AG04450 (cell line): ENCODE measurements at regions of chr1 and their contacts with region 1.

Region 1: DNA sequence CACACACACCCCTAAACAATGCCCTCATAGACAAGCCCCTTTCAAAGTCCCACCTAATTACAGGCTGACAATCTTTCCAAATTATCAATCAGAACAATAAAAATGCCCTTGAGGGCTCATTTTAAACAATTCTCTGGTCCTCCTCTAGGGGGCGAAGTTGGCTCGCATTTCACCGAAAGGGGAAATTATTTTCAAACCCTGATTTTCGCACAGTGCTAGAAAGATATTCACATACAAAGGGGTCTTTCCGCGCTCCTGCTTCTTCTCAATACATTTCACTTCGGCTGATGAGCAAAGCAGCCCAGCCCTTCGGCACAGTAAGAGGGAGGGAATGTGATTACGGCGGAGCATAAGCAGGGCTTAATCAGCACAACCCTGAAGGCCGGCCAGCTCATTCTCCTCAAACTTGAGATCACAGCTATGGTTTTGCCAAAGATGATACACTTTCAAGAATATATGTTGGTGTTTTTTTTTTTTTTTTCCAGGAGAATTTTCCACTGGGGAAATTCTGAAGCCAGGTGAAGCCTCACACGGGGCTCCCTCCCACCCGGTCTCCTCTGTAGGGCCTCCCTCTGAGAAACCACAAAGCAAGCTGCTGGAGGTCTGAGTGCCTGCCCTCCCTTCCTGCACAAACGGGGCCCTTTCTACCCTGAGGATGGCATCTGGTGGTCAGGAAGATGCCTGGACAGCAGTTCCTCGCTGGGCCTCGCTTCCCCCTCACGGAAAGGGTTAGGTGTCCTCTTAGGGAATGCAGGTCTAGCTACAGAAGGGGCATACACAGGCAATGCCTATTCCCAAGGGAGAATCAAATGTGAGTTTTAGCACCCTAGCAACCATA is 66.9 kb downstream of the GNG12 start:
- DNase-seq: peak; percentile 73
- H3K4me3 ChIP-seq: peak overlapping the region; percentile 37
- H3K27ac ChIP-seq: peak overlapping the region; percentile 87
- H3K27me3 ChIP-seq: no peaks in the 10 kb centered on the region
- CTCF ChIP-seq: peak; percentile 76

Region 2: DNA sequence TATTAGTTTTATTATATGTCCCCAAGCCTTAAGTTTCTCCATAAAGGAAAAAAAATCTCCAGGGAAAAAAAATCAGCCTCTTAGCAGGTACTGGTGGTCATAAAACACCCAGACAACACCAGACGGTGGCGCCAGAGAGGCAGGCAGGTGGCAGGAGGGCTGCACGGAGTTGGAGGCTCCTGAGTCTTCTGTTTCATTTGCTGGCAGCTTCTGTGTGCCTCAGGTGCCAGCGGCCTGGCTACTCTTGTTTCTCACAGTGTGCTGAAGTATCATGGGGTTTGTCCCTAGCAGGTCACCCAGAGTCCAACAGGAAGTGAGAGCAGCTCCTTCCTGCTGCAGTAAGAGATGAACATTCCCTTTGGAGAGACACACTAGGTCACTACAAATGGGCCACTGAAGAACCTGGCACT is 204.7 kb before region 1 on chr1:
- CTCF ChIA-PET with region 1: interaction called, 73 read pairs
- POLR2A ChIA-PET with region 1: no interaction called
- DNase-seq: peak; percentile 65
- H3K4me3 ChIP-seq: no peak overlapping the region
- H3K27ac ChIP-seq: no peak overlapping the region
- H3K27me3 ChIP-seq: no peaks in the 10 kb centered on the region
- CTCF ChIP-seq: peak; percentile 96

Region 3: DNA sequence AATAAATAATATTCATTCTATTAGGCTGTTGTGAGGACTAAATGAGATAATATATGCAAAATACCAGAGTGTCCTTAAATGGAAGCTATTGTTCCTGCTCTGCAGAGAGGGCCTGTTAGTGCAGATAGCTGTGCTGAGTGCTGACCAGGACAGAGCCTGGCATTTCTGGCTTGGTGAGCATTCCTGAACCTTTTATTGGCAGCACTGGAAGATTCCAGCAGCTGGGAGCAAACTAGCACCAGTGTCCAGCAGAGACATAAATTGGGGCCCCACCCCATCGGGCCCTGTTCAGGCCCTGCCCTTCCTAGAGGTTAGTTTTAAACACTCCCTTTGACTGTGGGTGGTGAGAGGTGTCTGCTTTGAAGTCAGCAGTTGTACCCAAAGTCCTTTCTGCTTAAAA is 167.3 kb before region 1 on chr1:
- CTCF ChIA-PET with region 1: no interaction called
- POLR2A ChIA-PET with region 1: no interaction called
- DNase-seq: no peak
- H3K4me3 ChIP-seq: no peak overlapping the region
- H3K27ac ChIP-seq: no peak overlapping the region
- H3K27me3 ChIP-seq: no peaks in the 10 kb centered on the region
- CTCF ChIP-seq: no peak

Region 4: GRCh38 chr1:67777440-67777839 is 11.1 kb after region 1 on chr1:
- CTCF ChIA-PET with region 1: interaction called, 16 read pairs
- POLR2A ChIA-PET with region 1: no interaction called
- DNase-seq: no peak
- H3K4me3 ChIP-seq: no peak overlapping the region
- H3K27ac ChIP-seq: no peak overlapping the region
- H3K27me3 ChIP-seq: no peaks in the 10 kb centered on the region
- CTCF ChIP-seq: no peak

Region 5: DNA sequence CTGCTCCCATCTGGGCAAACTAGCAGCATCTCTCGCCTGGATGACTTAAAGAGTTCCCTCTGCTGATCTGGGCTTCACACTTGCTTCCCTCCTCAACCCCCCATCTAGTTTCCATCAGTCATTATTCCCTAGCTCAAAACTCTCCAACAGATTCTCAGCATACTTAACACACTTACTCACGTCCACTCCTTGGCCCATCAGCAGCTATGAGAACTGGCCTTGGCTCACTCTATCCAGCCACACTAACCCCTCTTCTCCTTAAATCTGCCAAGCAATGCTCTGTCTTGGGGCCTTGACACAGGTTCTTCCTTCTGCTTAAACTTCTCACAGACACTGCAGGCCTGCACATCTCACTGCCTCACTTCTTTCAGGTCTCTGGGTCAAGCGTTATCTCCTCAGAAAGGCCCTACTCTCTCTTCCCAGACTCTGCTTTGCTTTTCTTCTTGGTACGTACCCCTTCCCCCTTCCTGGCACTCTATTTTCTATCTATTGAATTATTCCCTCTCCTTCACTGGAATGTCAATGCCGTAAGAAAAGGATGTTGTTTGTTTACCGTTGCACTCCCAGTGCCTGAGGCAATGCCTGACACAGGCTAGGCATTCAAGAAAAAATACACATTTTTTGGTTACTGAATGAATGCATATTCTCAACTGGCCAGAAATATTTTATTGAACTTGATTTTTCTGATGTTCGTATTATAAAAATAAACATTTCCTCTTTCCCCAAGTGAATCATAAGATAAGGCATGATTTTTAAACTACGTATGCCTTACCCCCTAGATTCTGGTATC is 25.5 kb after region 1 on chr1:
- CTCF ChIA-PET with region 1: interaction called, 29 read pairs
- POLR2A ChIA-PET with region 1: interaction called, 4 read pairs
- DNase-seq: peak; percentile 78
- H3K4me3 ChIP-seq: peak overlapping the region; percentile 22
- H3K27ac ChIP-seq: peak overlapping the region; percentile 98
- H3K27me3 ChIP-seq: no peaks in the 10 kb centered on the region
- CTCF ChIP-seq: no peak

Region 6: DNA sequence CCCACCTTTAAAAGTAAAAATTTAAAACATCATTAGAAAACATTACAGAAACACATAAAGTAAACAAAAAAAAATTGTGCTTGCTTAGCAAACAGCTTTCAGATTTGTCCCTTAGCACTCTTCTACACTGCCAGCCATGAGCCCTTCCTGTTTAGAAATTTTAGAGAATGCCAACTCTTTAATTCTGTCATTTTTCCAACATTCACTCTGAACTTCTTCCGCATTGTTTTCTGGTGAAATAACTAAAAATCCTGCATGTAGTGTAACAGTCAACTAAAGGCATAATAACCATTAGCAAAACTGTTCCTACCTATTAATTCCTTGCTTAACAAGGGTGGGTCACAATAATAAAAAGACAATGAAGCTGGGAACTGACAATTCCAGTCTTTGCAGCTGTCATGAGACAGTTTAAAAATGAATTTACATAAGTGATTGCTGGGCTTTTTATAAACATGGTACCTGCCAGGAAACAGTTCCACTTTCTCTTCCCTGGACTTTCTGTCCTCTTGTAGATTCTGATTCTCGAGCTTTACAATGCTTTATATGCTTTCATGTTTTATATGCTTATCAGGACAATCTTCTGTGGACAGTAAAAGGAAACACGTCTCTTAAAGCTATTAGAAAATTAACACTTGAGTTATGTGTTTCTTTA is 47.9 kb after region 1 on chr1:
- CTCF ChIA-PET with region 1: interaction called, 10 read pairs
- POLR2A ChIA-PET with region 1: no interaction called
- DNase-seq: no peak
- H3K4me3 ChIP-seq: no peak overlapping the region
- H3K27ac ChIP-seq: no peak overlapping the region
- H3K27me3 ChIP-seq: no peaks in the 10 kb centered on the region
- CTCF ChIP-seq: no peak

Region 7: GRCh38 chr1:67853704-67854103 is 87.3 kb after region 1 on chr1:
- CTCF ChIA-PET with region 1: interaction called, 110 read pairs
- POLR2A ChIA-PET with region 1: no interaction called
- DNase-seq: no peak
- H3K4me3 ChIP-seq: no peak overlapping the region
- H3K27ac ChIP-seq: no peak overlapping the region
- H3K27me3 ChIP-seq: no peaks in the 10 kb centered on the region
- CTCF ChIP-seq: peak; percentile 99

Region 8: DNA sequence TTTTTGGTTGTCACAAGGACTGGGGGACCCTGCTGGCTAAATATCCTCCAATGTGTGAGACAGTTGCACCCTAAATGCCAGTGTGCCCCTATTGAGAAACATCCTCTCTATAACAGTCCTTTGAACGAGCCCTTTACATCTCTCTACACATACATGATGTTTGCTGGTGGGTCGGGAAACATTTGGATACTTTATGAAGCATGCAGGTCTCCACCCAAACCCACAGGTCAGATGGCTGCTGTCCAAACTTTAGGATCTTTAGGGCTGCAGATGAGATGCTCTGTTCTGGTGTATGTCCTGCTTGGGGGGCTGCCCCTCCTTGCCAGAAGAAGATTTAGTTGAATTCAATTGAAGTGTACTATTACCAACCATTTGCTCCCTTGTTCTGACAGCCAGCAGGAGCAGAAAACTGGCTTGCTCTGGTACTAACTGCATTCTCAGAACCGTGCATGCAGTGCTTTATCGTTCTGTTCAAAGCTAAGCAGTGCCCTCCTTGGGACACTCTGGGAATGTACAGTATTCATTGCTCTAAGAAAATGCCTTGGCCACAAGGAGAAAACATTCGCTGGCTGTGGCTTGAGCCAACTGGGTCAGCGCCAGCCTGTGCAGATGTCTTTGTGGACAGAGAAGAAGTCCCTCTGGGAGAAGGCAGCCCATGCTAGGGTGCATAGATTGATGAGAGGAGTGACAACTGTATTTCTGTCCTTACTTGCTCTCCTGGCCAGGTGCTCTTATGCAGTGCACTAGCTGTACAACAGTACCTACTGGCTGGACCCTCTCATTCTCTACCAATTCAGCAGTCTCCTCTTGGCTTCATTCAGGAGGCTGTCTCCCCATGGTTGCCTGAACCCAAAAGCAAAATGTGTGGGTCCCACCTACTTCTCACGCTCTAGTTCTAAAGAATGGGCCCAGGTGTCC is 345.4 kb after region 1 on chr1:
- CTCF ChIA-PET with region 1: interaction called, 19 read pairs
- POLR2A ChIA-PET with region 1: no interaction called
- DNase-seq: peak; percentile 77
- H3K4me3 ChIP-seq: no peak overlapping the region
- H3K27ac ChIP-seq: peak overlapping the region; percentile 22
- H3K27me3 ChIP-seq: no peaks in the 10 kb centered on the region
- CTCF ChIP-seq: peak; percentile 79